ENCODE measurements at regions of chr2 and their contacts with region 1.

Region 1: GRCh38 chr2:64807417-64807816 is 153.7 kb upstream of the SERTAD2 start:
- DNase-seq: peak; percentile 100
- ATAC-seq: peak; percentile 96
- H3K4me3 ChIP-seq: no peak overlapping the region
- H3K27ac ChIP-seq: peak overlapping the region; percentile 76; the same call in 1 of the 2 replicates
- H3K4me1 ChIP-seq: peaks cover 12% of the 10 kb centered on the region
- H3K27me3 ChIP-seq: no peaks in the 10 kb centered on the region
- CTCF ChIP-seq: peak; percentile 22; the same call in 1 of the 2 replicates
- POLR2A ChIP-seq: no peak
- RAD21 ChIP-seq: peak; percentile 48

Region 2: GRCh38 chr2:64434039-64434657 is 373.3 kb before region 1 on chr2:
- CTCF ChIA-PET with region 1: no interaction called
- POLR2A ChIA-PET with region 1: no interaction called
- dilution Hi-C with region 1: no loop called
- in situ Hi-C with region 1: no loop called
- intact Hi-C with region 1: no loop called
- DNase-seq: no peak
- ATAC-seq: no peak
- H3K4me3 ChIP-seq: no peak overlapping the region
- H3K27ac ChIP-seq: no peak overlapping the region
- H3K4me1 ChIP-seq: no peaks in the 10 kb centered on the region
- H3K27me3 ChIP-seq: peaks cover 23% of the 10 kb centered on the region
- CTCF ChIP-seq: no peak
- POLR2A ChIP-seq: no peak
- RAD21 ChIP-seq: no peak

Region 3: GRCh38 chr2:64767670-64768468 is 39.5 kb before region 1 on chr2:
- CTCF ChIA-PET with region 1: no interaction called
- POLR2A ChIA-PET with region 1: no interaction called
- dilution Hi-C with region 1: no loop called
- in situ Hi-C with region 1: no loop called
- intact Hi-C with region 1: loop called (anchors 5 kb)
- DNase-seq: peak; percentile 89
- ATAC-seq: peak; percentile 76
- H3K4me3 ChIP-seq: peak overlapping the region; percentile 64
- H3K27ac ChIP-seq: peak overlapping the region; percentile 91
- H3K4me1 ChIP-seq: peaks cover 16% of the 10 kb centered on the region
- H3K27me3 ChIP-seq: no peaks in the 10 kb centered on the region
- CTCF ChIP-seq: no peak
- POLR2A ChIP-seq: peak; percentile 58
- RAD21 ChIP-seq: peak; percentile 32; the same call in 1 of the 2 replicates